ENCODE measurements at regions of chr2 and their contacts with region 1.

Region 1: GRCh38 chr2:187574969-187575750 is 20.9 kb upstream of the TFPI start:
- DNase-seq: no peak
- H3K4me3 ChIP-seq: no peak overlapping the region
- H3K27ac ChIP-seq: no peak overlapping the region
- H3K4me1 ChIP-seq: no peaks in the 10 kb centered on the region
- H3K27me3 ChIP-seq: no peaks in the 10 kb centered on the region
- CTCF ChIP-seq: no peak
- EP300 ChIP-seq: no peak
- POLR2A ChIP-seq: no peak

Region 2: GRCh38 chr2:187499941-187500532 is 75.1 kb before region 1 on chr2:
- intact Hi-C with region 1: loop called in 2 of 4 experiments (anchors 5 kb)
- DNase-seq: peak; percentile 35 to 70 (median 61)
- H3K4me3 ChIP-seq: no peak overlapping the region
- H3K27ac ChIP-seq: no peak overlapping the region
- H3K4me1 ChIP-seq: no peaks in the 10 kb centered on the region
- H3K27me3 ChIP-seq: no peaks in the 10 kb centered on the region
- CTCF ChIP-seq: peak; percentile 59 to 88 (median 84)
- EP300 ChIP-seq: no peak
- POLR2A ChIP-seq: no peak

Region 3: DNA sequence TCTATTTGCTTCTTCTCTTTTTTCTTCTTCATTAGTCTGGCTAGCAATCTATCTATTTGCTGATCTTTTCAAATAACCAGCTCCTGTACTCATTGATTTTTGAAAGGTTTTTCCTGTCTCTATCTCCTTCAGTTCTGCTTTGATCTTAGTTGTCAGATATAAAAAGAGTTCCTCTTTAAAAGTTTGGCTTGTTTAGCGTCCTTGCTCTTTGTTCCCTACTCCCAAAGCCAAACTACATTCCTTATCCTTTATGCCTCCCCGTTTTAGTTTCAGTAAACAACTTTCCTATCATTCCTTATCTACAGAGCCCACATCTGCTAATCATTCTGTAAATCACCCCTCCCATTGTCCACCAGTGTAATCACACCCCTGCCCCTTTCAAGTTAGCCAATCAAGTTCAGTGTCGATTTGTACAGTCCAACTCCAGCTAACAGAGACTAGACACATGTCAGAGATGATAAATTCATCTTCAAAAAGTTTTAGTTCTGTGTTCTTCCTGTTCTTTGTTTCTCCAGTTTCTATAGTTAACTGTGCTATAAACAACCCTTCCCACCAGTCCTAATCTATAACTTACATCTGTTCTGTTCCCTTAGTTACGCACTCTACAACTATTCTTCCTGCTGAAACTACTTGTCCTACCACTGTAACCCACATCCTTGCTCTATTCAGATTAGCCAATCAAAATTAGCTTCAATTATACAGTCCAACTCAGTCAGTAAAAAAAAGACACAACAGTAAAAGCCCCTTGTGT is 65.3 kb before region 1 on chr2:
- intact Hi-C with region 1: loop called in 2 of 4 experiments (anchors 5 to 10 kb)
- DNase-seq: no peak
- H3K4me3 ChIP-seq: no peak overlapping the region
- H3K27ac ChIP-seq: no peak overlapping the region
- H3K4me1 ChIP-seq: no peaks in the 10 kb centered on the region
- H3K27me3 ChIP-seq: no peaks in the 10 kb centered on the region
- CTCF ChIP-seq: no peak
- EP300 ChIP-seq: no peak
- POLR2A ChIP-seq: no peak

Region 4: DNA sequence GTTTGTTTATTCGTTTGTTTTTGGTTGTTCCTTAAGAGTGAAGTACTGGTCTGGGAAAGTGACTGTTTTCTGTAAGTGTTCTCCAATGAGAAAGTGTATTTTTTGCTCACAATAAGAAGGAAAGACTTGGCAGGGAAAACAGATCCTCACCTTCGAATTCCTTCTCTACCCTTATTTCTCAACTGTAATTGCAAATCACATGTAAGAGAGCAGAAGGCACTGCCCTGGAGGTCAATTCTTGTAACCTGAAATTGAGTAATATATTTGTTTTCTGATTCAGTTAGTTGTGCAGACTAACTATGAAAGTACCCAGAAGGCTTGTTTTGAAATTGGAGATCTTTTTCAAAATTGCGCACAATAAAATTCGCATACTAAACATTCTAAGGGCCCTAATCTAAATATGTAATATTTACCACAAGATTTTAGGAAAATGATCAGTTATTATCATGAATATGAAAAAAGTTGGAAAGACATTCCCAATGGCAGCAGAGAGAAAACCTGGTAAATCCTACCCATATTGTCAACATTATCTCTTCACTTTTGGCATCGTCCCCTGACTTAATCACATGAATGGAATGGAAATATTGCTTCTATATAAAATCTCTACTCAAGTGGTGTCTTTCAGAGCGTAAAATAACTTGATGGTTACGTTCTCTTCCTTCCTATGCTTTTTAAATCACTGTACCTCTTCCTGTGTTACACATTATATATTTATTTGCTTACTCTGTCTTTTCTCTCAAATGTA is 45.0 kb before region 1 on chr2:
- intact Hi-C with region 1: loop called in 1 of 4 experiments (anchors 5 kb)
- DNase-seq: no peak
- H3K4me3 ChIP-seq: no peak overlapping the region
- H3K27ac ChIP-seq: no peak overlapping the region
- H3K4me1 ChIP-seq: no peaks in the 10 kb centered on the region
- H3K27me3 ChIP-seq: no peaks in the 10 kb centered on the region
- CTCF ChIP-seq: no peak
- EP300 ChIP-seq: no peak
- POLR2A ChIP-seq: no peak

Region 5: DNA sequence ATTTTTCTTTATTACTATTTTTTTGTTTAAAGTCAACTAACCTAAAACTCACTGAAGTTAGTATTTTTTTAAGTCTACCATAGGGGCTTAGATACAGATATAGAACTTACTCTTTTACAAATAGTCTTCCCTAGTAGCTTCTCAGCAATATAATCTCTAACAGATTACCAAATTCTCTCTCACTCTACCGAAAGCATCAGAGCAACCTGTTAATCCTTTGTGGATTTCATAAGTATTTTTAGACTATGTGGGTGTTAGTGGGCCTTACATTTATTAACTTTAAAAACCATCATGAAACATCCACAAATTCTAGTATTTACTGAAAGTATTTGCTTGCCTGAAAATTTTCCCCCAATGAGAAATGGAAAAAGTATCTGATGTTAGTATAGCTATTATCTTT is 63.7 kb after region 1 on chr2:
- intact Hi-C with region 1: no loop called
- DNase-seq: no peak
- H3K4me3 ChIP-seq: no peak overlapping the region
- H3K27ac ChIP-seq: no peak overlapping the region
- H3K4me1 ChIP-seq: no peaks in the 10 kb centered on the region
- H3K27me3 ChIP-seq: peaks cover 2% of the 10 kb centered on the region
- CTCF ChIP-seq: no peak
- EP300 ChIP-seq: no peak
- POLR2A ChIP-seq: no peak

Measured in ovary (tissue), 10 donors.